Left colon (tissue), 2 donors: ENCODE measurements at regions of chr1 and their contacts with region 1.

Region 1: DNA sequence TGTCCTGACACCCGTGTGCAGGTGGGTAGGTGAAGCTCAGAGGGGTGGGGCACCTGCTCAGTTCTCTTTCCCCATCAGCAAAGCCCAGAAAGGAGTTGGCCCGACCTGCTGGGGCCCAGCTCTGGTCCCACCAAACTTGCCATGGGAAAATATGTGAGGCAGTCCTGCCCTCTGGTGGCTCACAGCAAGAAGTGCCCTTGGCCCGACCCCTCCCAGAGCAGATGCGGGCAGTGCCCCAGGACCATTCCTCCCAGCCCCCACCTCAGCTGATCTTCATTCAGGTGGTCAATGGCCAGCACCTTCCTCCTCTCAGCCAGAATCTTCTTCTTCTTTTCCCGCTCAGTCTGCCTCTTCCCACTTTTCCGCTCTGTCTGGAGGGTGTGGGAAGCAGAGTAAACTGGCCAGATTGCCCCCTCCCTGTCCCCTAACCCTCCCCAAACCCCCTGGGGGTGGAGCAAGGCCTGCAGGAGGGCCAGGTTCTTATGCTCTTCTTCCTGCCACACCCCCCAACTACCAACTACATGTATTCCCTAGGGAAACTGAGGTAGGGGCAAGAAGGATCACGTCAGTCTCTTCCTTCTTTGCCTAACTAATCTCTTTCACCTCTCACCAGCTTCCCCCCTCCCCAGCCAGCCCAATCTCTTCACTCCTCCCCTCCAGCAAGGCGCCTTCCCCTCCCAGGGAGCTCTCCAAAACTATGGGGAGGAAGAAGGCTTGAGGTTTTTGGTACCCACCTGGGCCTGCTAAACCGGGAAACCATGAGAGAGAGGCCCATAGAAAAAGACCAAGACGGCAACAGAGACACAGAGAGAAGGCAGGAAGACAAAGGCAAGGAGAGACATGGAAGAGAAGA is 15.6 kb downstream of the TNNT2 start:
- DNase-seq: peak in 1 of 2 donors; percentile 36
- ATAC-seq: peak; percentile 78

Region 2: GRCh38 chr1:200890818-200891773 is 470.8 kb before region 1 on chr1:
- intact Hi-C with region 1: no loop called
- DNase-seq: peak; percentile 65 to 75
- ATAC-seq: peak; percentile 41

Region 3: DNA sequence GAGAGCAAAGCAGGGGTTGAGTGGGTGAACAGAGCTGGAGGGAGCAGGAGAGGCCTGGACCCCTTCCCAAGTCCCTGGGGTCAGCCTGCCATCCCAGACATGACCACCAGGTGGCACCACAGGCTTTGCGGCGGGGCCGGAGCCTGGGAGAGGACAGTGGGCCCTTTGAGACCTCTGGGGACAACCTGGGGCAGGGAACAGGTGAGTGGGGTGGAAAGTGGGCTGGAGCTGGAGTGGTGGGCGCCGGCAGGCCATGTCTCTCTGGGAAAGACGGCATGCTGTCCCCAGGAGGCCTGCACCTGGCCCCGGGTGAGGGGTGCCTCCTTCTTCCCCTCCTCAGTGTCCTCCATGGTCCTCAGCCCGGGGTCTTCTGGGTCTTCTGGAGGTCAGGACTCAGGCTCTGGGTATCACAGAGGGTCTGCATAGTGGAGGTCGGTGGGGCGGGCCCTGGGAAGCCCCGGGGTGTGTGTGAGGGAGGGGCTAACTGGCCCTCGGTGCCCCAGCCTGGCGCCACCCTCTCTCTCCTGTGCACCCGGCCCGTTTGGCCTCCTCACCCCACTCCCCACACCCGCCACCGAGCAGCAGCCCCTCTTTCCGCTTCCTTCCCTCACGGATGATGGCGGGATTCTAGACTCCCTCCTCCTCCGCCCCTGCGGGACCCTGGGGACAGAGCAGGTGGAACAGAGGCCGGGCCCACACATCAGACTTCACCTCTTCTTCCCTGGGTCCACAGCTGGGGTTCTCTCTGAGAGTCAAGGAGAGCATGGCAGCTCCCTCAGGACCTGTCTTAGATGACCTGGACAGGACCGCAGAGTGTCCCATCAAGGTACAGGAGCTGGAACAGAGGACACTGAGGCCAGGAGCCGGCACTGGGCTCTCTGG is 107.0 kb before region 1 on chr1:
- intact Hi-C with region 1: loop called (anchors 5 kb)
- DNase-seq: peak in 1 of 2 donors; percentile 70
- ATAC-seq: peak; percentile 72

Region 4: GRCh38 chr1:201530741-201531531 is 169.1 kb after region 1 on chr1:
- intact Hi-C with region 1: no loop called
- DNase-seq: peak; percentile 62 to 80
- ATAC-seq: peak; percentile 67

Region 5: GRCh38 chr1:201545851-201546492 is 184.1 kb after region 1 on chr1:
- intact Hi-C with region 1: no loop called
- DNase-seq: no peak
- ATAC-seq: peak; percentile 54